GM13977 (cell line): ENCODE measurements at regions of chr9 and their contacts with region 1.

Region 1: DNA sequence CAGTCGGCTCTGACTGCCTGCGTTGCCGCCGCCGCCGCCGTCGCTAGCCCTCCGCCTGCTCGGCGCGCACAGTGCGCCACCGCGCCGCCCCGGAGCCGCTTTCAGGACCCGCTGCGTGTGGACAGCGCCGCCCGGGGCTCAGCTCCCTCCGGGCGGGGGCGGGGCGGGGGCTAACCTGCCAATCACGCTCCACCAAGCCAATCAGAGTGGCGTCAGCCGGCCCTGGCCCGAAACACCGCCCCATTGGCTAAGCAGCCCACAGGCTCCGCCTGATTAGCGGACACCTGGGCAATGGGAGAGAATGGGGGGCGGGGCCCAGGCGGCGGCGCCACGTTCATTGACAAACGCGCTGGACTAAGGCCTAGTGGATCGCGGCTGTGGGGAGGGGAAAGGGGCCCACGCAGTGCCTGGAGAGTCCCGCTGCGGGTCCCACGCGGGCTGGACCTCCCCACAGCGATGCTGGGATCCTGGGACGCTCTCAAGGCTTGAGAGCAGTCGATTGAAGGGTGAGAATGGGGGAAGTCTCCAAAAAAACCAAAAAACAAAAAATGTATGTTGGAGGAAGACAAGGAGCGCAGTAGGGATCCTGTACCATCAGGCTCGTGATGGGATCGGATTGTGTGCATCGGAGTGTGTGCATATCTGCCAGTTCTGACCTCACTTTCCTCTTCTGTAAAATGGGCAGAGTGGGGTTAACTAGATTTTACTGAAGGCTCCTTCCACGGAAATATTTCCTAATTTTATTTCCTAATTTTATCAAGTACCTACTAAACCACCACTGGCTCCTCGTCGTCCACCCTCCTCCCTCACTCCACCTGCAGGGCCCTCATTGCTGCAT is 6.3 kb downstream of the PAX5 start:
- DNase-seq: peak; percentile 100
- CTCF ChIP-seq: no peak

Region 2: DNA sequence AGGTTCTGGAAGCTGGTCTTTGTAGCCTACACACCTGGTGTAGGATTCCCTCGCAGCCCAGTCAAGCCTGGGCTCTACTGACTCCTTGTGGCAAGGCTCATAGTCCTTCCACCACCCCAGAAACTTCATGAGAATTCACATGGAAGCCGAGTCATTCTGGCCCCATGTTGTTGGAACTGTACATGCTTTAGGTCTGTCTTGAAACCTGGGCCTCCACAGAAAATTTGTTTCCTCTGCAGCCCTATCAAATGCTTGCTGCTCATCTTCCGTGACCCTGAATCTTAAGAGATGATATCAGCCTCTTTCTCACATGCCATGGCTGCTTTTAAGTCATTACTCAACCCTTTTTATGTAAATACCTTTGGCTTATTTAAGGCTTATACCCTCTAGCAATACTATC is 281.3 kb after region 1 on chr9:
- in situ Hi-C with region 1: loop called (anchors 10 kb)
- DNase-seq: peak; percentile 46
- CTCF ChIP-seq: peak; percentile 59